ENCODE measurements at regions of chr19 and their contacts with region 1.

Region 1: GRCh38 chr19:45439569-45440254 is 16.0 kb upstream of the ERCC1 start:
- DNase-seq: peak; percentile 94

Region 2: DNA sequence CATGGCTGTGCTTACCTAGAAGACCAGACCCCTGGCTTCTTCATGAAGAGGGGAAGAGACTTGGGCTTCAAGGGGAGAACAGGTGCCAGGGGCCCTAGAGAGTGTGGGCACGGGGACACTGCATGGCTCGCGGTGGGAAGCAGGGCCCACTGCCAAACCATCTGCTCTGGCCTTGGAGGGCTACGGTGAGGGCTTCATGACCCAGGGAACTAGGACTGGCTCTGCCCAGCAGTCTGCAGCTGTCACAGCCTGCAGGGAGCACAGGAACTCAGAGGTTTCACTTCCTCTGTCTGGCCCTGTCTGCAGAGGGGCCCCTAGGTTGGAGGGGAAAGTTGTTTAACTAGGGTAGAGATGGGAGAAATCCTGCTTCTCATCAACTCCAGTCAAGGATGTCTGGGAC is 20.3 kb before region 1 on chr19:
- intact Hi-C with region 1: no loop called
- DNase-seq: no peak

Region 3: GRCh38 chr19:45478454-45479238 is 38.9 kb after region 1 on chr19:
- intact Hi-C with region 1: loop called (anchors 1 kb)
- DNase-seq: peak; percentile 93

Measured in cardiac septum (tissue), 1 donor.